ENCODE measurements at regions of chr17 and their contacts with region 1.

Region 1: DNA sequence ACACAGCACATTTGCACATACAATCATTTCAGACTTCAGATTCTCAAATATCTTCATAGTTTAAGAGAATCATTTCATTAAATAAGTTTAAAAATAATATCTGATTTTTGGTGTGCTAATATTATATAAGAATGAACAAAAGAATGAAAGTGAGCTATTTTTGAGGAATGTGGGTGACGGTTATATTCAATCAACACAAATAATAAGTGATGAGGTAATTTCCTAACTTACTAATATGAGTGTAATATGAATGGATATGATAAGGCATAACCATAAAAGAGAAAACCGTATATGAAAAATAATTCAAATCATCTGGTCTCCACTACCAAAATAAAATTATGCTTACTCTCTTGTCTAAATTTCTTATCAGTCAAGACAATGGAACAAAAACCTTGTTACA is 68.4 kb upstream of the NACA2 start:
- DNase-seq: no peak
- ATAC-seq: no peak
- H3K4me3 ChIP-seq: no peak overlapping the region
- H3K27ac ChIP-seq: no peak overlapping the region
- H3K4me1 ChIP-seq: no peaks in the 10 kb centered on the region
- H3K27me3 ChIP-seq: no peaks in the 10 kb centered on the region
- CTCF ChIP-seq: no peak
- POLR2A ChIP-seq: no peak
- RAD21 ChIP-seq: no peak

Region 2: GRCh38 chr17:61689610-61690180 is 30.3 kb after region 1 on chr17:
- CTCF ChIA-PET with region 1: no interaction called
- POLR2A ChIA-PET with region 1: no interaction called
- dilution Hi-C with region 1: no loop called
- in situ Hi-C with region 1: no loop called
- intact Hi-C with region 1: loop called (anchors 5 kb)
- DNase-seq: peak; percentile 41
- ATAC-seq: peak; percentile 21; the same call in 1 of the 2 replicates
- H3K4me3 ChIP-seq: no peak overlapping the region
- H3K27ac ChIP-seq: no peak overlapping the region
- H3K4me1 ChIP-seq: no peaks in the 10 kb centered on the region; the same call in 1 of the 2 replicates
- H3K27me3 ChIP-seq: no peaks in the 10 kb centered on the region
- CTCF ChIP-seq: no peak
- POLR2A ChIP-seq: no peak
- RAD21 ChIP-seq: no peak

Measured in IMR-90 (cell line).